ENCODE measurements at regions of chr2 and their contacts with region 1.

Region 1: DNA sequence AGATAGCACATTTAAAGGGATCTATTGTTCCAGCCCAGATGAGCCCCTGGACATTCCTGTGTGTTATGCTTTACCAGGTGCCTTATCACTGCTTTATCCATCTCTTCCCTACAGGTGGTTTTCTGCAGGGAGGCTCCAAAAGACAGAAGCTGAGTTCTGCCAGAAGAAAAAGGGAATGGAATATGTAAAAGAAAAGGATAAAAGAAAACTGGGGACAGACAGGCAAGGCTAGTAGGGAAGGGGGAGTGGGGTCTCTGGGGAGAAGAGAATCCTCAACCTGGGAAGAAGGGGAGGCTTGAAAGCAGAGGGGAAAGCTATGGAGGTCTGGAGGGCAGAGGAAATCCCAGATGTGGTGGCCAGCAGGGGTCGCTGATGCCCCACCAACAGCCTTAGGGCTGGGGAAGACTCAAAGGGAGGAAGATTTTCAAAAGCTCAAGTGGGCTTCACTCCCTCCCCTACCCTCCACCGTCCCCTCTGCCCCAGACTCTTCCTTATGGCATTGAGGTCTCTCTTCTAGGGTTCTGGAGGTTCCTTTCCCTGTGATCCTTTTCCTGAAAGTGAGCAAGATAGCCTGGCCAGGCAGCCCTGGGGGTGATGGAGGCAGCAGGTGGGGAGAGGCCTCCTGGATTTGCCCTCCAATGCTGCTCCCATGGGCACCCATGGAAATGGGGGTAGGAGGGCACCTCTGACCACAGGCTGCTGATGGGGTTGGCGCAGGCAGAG is 178.1 kb upstream of the PKDCC start:
- DNase-seq: peak; percentile 81
- H3K4me3 Mint-ChIP-seq: no peak overlapping the region
- H3K27ac Mint-ChIP-seq: no peak overlapping the region
- H3K4me1 Mint-ChIP-seq: peaks cover 5% of the 10 kb centered on the region
- H3K27me3 Mint-ChIP-seq: peaks cover 6% of the 10 kb centered on the region

Region 2: DNA sequence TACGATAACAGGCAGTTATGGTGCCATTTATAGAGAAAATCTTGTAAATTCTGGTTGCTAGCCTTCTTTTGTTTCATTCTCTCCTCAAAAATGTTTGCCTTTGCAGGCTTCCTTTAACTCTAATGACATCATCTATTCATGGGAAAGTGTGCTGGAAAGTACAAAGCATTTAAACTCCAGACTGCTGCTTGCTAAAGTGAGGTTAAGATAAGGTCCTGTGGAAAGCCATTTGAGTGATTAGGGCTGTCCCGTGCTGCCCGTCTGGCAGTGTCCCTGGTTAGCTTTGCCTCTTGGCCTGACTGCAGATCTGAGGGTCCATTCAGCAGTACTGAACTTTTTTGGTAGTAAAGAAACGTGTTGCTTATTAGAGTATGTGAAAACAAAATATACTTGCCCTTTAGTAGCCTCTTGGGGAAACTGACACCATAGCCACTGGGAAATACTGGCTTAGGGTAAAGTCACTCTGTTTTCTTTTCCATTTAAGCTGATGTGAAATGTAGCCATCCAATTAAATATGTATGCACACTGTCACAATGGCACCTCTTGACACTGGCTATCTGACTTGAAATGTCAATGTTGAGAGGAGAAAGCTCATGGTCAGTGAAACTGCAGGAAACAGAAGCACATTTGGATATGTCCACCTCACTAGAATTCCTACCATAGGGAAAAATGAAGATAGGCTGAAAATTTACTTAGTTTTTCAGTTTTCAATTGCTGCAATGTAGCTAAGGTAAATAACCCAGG is 1739.3 kb before region 1 on chr2:
- CTCF ChIA-PET with region 1: no interaction called
- POLR2A ChIA-PET with region 1: no interaction called
- intact Hi-C with region 1: no loop called
- DNase-seq: no peak
- H3K4me3 Mint-ChIP-seq: no peak overlapping the region
- H3K27ac Mint-ChIP-seq: no peak overlapping the region
- H3K4me1 Mint-ChIP-seq: no peaks in the 10 kb centered on the region
- H3K27me3 Mint-ChIP-seq: no peaks in the 10 kb centered on the region

Region 3: DNA sequence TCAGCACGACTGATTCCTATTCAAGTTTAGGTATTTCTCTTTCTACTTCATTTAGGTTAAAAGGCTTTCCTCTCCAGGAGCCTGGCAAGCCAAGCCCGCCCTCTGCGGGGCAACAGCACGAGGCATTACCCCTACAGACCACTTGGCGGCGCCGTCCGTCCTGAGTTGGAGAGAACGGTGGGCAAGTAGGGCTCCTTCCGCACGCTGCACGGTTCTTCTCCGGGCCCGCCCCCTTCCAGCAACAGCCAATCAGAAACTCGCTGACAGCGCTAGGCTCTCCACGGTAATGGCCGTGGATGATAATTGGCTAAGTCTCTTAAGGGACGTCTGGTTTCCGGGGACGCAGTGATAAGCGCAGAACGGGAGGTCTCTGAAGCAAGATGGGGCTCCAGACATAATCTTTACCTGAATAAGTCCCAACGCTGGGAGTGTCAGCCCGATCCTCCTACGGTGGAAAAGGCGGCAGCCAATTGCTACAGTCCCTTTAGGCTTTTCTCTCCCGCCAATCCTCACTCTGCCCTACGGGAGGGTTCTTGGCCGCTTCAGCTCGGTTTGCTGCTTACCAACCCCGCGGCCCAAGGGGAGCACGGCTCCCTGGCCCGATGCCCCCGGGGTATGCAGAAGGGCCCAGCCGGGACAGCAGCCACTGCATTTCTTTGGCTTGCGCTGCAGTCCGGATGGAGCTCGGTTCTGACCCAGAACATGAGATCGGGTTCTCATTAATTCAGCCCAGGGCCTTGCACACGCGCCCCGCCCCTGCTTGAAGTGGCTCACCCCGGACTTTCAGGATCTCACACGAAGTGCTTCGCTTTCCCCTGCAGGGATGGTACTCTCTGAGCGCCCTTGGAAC is 28.8 kb before region 1 on chr2:
- CTCF ChIA-PET with region 1: interaction called, 21 read pairs
- POLR2A ChIA-PET with region 1: no interaction called
- intact Hi-C with region 1: loop called (anchors 1 kb)
- DNase-seq: peak; percentile 99
- H3K4me3 Mint-ChIP-seq: peak overlapping the region; percentile 85
- H3K27ac Mint-ChIP-seq: peak overlapping the region; percentile 81
- H3K4me1 Mint-ChIP-seq: peaks cover 6% of the 10 kb centered on the region
- H3K27me3 Mint-ChIP-seq: peaks cover 8% of the 10 kb centered on the region

Region 4: DNA sequence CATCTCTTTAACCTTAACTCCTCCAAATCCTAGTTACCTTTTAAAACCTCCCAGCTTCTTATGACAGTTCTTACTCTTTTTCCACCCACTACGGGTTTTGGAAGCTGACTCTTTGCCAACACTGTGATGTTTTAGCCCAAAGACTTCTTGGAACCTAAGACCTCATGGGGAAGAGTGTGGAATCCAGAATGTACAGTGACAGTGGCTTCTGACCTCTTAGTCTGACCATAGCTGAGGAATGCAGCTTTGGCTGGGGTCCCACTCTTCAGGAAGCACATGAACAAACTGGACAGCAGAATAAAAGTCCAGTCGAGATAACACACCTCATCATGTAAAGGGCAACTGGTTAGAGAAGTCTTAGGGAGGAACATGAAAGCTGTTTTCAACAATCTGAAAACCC is 17.1 kb after region 1 on chr2:
- CTCF ChIA-PET with region 1: interaction called, 10 read pairs
- POLR2A ChIA-PET with region 1: no interaction called
- intact Hi-C with region 1: no loop called
- DNase-seq: no peak
- H3K4me3 Mint-ChIP-seq: no peak overlapping the region
- H3K27ac Mint-ChIP-seq: no peak overlapping the region
- H3K4me1 Mint-ChIP-seq: no peaks in the 10 kb centered on the region
- H3K27me3 Mint-ChIP-seq: peaks cover 1% of the 10 kb centered on the region

Region 5: GRCh38 chr2:42009657-42010580 is 140.2 kb after region 1 on chr2:
- CTCF ChIA-PET with region 1: no interaction called
- POLR2A ChIA-PET with region 1: no interaction called
- intact Hi-C with region 1: loop called (anchors 1 kb)
- DNase-seq: peak; percentile 49
- H3K4me3 Mint-ChIP-seq: no peak overlapping the region
- H3K27ac Mint-ChIP-seq: peak overlapping the region; percentile 16
- H3K4me1 Mint-ChIP-seq: peaks cover 15% of the 10 kb centered on the region
- H3K27me3 Mint-ChIP-seq: peaks cover 12% of the 10 kb centered on the region

Region 6: DNA sequence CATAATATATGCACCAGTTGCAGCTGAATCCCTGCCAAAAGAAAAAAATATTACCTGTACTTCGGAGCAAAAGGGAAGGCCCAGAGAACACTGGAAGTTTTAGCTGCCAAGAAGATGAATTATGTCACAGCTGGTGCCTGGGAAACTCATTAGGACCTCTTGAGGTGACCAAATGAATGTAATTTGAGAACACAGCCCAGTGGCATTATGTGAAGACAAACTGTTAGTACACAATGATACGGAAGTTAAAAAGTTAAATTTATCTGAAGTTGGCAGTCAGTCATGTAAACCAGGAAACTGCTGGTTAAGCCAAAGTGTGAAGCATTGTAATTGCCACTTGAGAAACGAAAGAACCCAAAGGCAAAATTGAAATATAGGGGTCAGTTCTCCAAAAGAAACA is 380.2 kb after region 1 on chr2:
- CTCF ChIA-PET with region 1: no interaction called
- POLR2A ChIA-PET with region 1: no interaction called
- intact Hi-C with region 1: loop called (anchors 10 kb)
- DNase-seq: no peak
- H3K4me3 Mint-ChIP-seq: no peak overlapping the region
- H3K27ac Mint-ChIP-seq: no peak overlapping the region
- H3K4me1 Mint-ChIP-seq: peaks cover 49% of the 10 kb centered on the region
- H3K27me3 Mint-ChIP-seq: no peaks in the 10 kb centered on the region

Measured in activated CD4-positive, alpha-beta memory T cell treated with anti-CD3 and anti-CD28 coated beads for 36 hours (primary cell).